GM10248 (cell line): ENCODE measurements at regions of chr16 and their contacts with region 1.

Region 1: DNA sequence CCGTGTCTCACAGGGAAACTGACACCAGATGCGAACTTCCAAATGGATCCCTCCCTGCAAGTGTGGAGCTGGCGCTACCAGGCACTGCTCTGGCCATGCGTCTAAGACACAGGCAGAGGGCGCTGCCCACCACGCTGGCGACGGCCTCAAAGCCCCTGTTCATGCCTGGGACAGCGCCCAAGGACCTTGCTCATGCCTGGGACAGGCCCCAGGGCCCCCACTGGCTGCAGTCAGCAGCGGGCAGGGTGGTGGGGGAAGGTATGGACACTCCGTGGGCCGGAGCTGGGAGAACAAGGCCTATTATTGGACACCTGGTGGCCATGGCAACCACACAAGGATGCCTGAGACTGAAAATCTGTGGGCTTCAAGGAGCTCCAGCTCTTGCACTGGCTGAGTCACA is 8.8 kb downstream of the ZG16B start:
- DNase-seq: peak; percentile 77
- CTCF ChIP-seq: peak; percentile 74

Region 2: DNA sequence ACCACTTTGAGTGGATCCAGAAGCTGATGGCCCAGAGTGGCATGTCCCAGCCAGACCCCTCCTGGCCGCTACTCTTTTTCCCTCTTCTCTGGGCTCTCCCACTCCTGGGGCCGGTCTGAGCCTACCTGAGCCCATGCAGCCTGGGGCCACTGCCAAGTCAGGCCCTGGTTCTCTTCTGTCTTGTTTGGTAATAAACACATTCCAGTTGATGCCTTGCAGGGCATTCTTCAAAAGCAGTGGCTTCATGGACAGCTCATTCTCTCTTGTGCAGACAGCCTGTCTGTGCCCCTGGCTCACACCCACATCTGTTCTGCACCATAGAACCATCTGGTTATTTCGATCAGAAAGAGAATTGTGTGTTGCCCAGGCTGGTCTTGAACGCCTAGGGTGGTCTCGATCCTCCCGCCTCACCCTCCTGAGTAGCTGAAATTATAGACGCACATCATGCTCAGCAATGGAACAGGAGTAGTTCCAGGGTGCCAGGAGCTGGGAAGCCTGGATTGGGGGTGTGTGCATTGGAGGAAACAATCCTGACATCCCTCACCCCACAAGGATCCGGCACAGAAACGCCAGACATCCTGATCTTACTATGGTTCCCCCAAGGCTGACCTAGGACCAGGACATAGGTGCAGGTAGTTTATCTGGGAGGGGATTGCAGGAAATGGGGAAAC is 17.3 kb before region 1 on chr16:
- CTCF ChIA-PET with region 1: interaction called, 18 read pairs
- POLR2A ChIA-PET with region 1: no interaction called
- DNase-seq: no peak
- CTCF ChIP-seq: no peak

Region 3: GRCh38 chr16:2848933-2849725 is 10.2 kb after region 1 on chr16:
- CTCF ChIA-PET with region 1: interaction called, 14 read pairs
- POLR2A ChIA-PET with region 1: no interaction called
- DNase-seq: no peak
- CTCF ChIP-seq: no peak

Region 4: GRCh38 chr16:2854700-2855309 is 15.9 kb after region 1 on chr16:
- CTCF ChIA-PET with region 1: interaction called, 14 read pairs
- POLR2A ChIA-PET with region 1: no interaction called
- DNase-seq: peak; percentile 19
- CTCF ChIP-seq: peak; percentile 19